Spleen (tissue), 13 donors: ENCODE measurements at regions of chr16 and their contacts with region 1.

Region 1: GRCh38 chr16:46689365-46690280 is at the start of gene ORC6:
- DNase-seq: peak; percentile 99
- H3K4me3 ChIP-seq: peak within 1 kb of the TSS; percentile 74 to 99 (median 94)
- H3K27ac ChIP-seq: peak within 1 kb of the TSS; percentile 89 to 99 (median 96)
- H3K4me1 ChIP-seq: peaks cover 22 to 76% (median 60%) of the 10 kb centered on the region in 6 donors
- H3K27me3 ChIP-seq: no peaks in the 10 kb centered on the region
- CTCF ChIP-seq: peak in 6 of 11 experiments; percentile 3 to 55 (median 46)
- POLR2A ChIP-seq: no peak
- total RNA-seq, gene ORC6: 3.1 to 10.0 (median 5.9) TPM

Region 2: GRCh38 chr16:46789499-46790414 is 100.1 kb after region 1 on chr16:
- intact Hi-C with region 1: no loop called
- DNase-seq: peak; percentile 97
- H3K4me3 ChIP-seq: peak overlapping the region; percentile 50 to 82 (median 65)
- H3K27ac ChIP-seq: peak overlapping the region in 7 of 8 donors; percentile 58 to 80 (median 71)
- H3K4me1 ChIP-seq: peaks cover 2 to 42% (median 23%) of the 10 kb centered on the region in 6 donors
- H3K27me3 ChIP-seq: no peaks in the 10 kb centered on the region
- CTCF ChIP-seq: no peak
- POLR2A ChIP-seq: no peak

Region 3: DNA sequence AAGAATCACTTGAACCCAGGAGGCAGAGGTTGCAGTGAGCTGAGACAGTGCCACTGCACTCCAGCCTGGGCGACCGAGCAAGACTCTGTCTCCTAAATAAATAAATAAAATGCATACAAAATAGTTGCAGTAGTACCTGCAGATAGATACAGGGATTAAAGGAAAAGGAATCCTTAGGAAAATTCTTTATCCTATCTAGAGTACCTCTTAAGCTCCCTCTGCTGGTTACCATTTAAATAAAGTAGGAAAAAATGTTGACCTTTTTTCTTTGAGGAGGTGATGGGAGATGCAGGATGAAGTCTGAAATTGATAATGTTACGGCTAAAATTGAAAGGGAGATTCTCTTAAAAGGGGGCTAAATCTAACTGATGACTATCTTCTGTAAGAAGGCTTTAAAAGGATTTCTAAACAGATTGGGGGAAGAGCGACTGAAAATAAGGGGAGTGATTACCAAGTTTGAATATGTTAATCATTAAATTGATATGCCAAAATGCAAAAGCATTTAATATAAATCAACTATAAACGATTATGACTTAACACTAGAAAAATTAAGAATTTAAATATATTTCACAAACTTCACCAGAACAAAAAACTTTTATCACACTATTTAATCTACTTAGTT is 111.9 kb after region 1 on chr16:
- intact Hi-C with region 1: loop called (anchors 10 kb)
- DNase-seq: no peak
- H3K4me3 ChIP-seq: no peak overlapping the region
- H3K27ac ChIP-seq: no peak overlapping the region
- H3K4me1 ChIP-seq: no peaks in the 10 kb centered on the region
- H3K27me3 ChIP-seq: no peaks in the 10 kb centered on the region
- CTCF ChIP-seq: peak in 3 of 11 experiments; percentile 15 to 25 (median 20)
- POLR2A ChIP-seq: no peak

Region 4: GRCh38 chr16:46822270-46822669 is 132.6 kb after region 1 on chr16:
- intact Hi-C with region 1: loop called (anchors 10 kb)
- DNase-seq: no peak
- H3K4me3 ChIP-seq: no peak overlapping the region
- H3K27ac ChIP-seq: no peak overlapping the region
- H3K4me1 ChIP-seq: peaks cover 0 to 29% (median 5%) of the 10 kb centered on the region in 6 donors
- H3K27me3 ChIP-seq: no peaks in the 10 kb centered on the region
- CTCF ChIP-seq: no peak
- POLR2A ChIP-seq: no peak